ENCODE measurements at regions of chr14 and their contacts with region 1.

Region 1: GRCh38 chr14:90903101-90903500 is 86.9 kb upstream of the TTC7B start:
- DNase-seq: peak; percentile 43
- ATAC-seq: peak; percentile 78 to 82

Region 2: DNA sequence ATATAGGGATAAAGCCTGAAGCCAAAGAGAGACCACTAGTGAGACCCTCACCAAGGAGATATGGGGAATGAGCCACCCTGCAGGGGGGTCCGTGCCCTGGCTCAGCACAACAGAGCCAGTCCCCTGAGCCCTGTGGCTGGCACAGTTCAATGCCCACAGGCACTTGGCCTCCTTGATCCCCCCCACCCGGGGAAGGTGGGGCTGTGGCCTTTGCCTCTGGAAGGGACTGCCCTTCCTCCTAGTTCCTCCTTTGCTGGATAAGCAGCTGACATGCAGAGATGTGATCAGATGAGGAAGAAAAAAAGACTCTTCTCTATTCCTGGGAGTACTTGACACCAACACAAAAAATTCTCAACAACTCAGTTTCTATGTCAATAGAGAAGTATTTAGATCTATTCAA is 106.8 kb before region 1 on chr14:
- intact Hi-C with region 1: no loop called
- DNase-seq: no peak
- ATAC-seq: peak; percentile 46 to 56

Region 3: GRCh38 chr14:91286530-91286937 is 383.4 kb after region 1 on chr14:
- intact Hi-C with region 1: loop called (anchors 5 to 10 kb)
- DNase-seq: peak; percentile 76
- ATAC-seq: peak; percentile 58 to 77